ENCODE measurements at regions of chr15 and their contacts with region 1.

Region 1: GRCh38 chr15:74950078-74951000 is 6.2 kb downstream of the RPP25 start:
- DNase-seq: peak; percentile 83 to 90
- ATAC-seq: peak; percentile 71 to 85
- H3K4me3 ChIP-seq: no peak overlapping the region
- H3K27ac ChIP-seq: no peak overlapping the region
- H3K4me1 ChIP-seq: peaks cover 21% of the 10 kb centered on the region; the same call in 2 of the 3 replicates
- CTCF ChIP-seq: peak; percentile 99
- EP300 ChIP-seq: no peak
- POLR2A ChIP-seq: no peak
- RAD21 ChIP-seq: peak; percentile 96 to 99

Region 2: GRCh38 chr15:74781431-74782258 is 168.7 kb before region 1 on chr15 and contains the start of gene CSK:
- CTCF ChIA-PET with region 1: interaction called, 11 read pairs
- POLR2A ChIA-PET with region 1: no interaction called
- DNase-seq: peak; percentile 67 to 86
- ATAC-seq: peak; percentile 64 to 82
- H3K4me3 ChIP-seq: peak within 1 kb of the TSS; percentile 97
- H3K27ac ChIP-seq: peak within 1 kb of the TSS; percentile 97 to 98
- H3K4me1 ChIP-seq: peaks cover 22% of the 10 kb centered on the region
- CTCF ChIP-seq: peak; percentile 97
- EP300 ChIP-seq: no peak
- POLR2A ChIP-seq: peak; percentile 88
- RAD21 ChIP-seq: no peak
- polyA plus RNA-seq, gene CSK: 17.8 and 22.2 TPM in 2 replicates

Region 3: GRCh38 chr15:74913041-74913440 is 37.3 kb before region 1 on chr15:
- CTCF ChIA-PET with region 1: interaction called, 36 read pairs
- POLR2A ChIA-PET with region 1: no interaction called
- DNase-seq: no peak
- ATAC-seq: no peak
- H3K4me3 ChIP-seq: no peak overlapping the region
- H3K27ac ChIP-seq: no peak overlapping the region
- H3K4me1 ChIP-seq: no peaks in the 10 kb centered on the region
- CTCF ChIP-seq: no peak
- EP300 ChIP-seq: no peak
- POLR2A ChIP-seq: no peak
- RAD21 ChIP-seq: no peak

Region 4: GRCh38 chr15:74964794-74965193 is 14.5 kb after region 1 on chr15:
- CTCF ChIA-PET with region 1: interaction called, 54 read pairs
- POLR2A ChIA-PET with region 1: no interaction called
- DNase-seq: no peak
- ATAC-seq: peak; percentile 37 to 40; a peak in 2 of 6 replicates
- H3K4me3 ChIP-seq: no peak overlapping the region
- H3K27ac ChIP-seq: peak overlapping the region in 1 of 2 experiments; percentile 48; a peak in 2 of 6 replicates
- H3K4me1 ChIP-seq: peaks cover 15% of the 10 kb centered on the region; the same call in 2 of the 3 replicates
- CTCF ChIP-seq: no peak
- EP300 ChIP-seq: no peak
- POLR2A ChIP-seq: no peak
- RAD21 ChIP-seq: no peak

Region 5: DNA sequence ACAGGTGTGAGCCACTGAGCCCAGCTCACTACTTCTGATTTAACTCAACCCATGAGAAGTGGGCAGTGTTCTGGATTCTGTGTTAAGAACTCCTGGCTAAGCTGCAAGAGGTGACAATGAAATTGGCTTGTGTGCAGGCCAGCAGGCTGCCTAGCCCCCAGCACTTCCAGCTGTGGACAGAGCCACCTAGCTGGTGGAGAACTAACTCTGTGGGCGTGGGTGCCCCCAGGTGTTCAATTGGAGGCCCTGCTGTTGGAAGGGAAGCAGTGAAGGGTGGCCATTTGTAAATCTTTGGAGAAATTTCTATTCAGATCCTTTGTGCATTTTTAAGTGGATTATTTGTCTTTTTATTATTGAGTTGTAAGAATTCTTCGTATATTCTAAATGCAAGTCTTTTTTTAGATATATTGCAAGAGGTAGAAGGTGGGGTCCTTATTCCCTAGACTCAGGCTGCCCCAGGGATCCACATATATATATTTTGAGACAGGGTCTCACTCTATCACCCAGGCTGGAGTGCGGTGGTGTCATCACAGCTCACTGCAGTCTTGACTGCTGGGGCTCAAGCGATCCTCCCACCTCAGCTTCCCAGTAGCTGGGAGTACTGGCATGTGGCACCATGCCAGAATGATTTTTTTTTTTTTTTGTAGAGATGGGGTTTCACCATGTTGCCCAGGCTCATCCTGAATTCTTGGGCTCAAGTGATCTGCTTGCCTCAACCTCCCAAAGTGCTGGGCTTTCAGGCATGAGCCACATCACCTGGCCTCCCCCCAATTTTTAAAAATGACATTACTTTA is 37.9 kb after region 1 on chr15:
- CTCF ChIA-PET with region 1: interaction called, 30 read pairs
- POLR2A ChIA-PET with region 1: no interaction called
- DNase-seq: peak; percentile 64 to 78
- ATAC-seq: peak; percentile 95 to 97
- H3K4me3 ChIP-seq: no peak overlapping the region
- H3K27ac ChIP-seq: no peak overlapping the region
- H3K4me1 ChIP-seq: peaks cover 11% of the 10 kb centered on the region
- CTCF ChIP-seq: peak; percentile 68
- EP300 ChIP-seq: no peak
- POLR2A ChIP-seq: no peak
- RAD21 ChIP-seq: peak; percentile 79 to 84